Sigmoid colon (tissue), 7 donors: ENCODE measurements at regions of chr16 and their contacts with region 1.

Region 1: DNA sequence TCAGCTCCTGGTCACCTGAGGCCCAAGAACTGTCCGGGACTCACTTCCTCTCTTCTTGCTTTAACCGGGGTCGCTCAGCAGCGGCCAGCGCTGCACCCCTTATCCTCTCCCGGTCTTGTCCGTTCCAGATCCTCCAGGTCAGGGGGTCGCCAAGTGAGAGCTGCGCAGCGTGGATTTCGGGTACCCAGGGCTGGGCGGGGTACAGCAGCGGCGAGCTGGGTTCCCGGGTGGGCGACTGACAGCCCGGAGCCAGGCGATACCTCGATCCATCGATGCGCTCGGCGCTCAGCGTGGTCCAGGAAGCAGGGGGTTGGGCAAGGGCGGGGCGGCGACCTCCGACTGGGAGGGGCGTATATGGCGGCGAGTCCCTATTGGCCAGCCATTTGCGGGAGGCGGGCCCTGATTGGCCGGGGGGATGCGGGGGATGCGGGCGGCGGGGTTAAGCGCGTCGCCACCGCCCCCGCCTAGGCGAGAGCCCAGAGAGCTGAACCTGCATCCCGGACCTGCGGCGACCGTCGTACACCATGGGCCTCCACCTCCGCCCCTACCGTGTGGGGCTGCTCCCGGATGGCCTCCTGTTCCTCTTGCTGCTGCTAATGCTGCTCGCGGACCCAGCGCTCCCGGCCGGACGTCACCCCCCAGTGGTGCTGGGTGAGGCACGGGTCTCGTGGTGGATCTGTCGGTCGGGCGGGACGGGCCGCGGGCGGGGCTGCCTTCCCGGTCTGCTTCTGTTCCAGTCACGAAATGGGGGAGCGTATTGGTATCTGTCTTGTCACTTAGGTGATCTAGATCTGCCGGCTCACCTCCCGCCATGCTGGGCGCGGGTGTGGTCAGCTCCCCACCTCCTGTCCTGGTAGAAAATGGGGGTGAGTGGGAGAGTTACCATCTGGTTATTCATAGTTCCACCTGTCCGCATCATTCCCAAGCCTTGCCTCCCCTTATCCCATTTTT is at the start of gene PLA2G15:
- DNase-seq: peak; percentile 98
- H3K4me3 ChIP-seq: peak within 1 kb of the TSS; percentile 68 to 90 (median 80)
- H3K27ac ChIP-seq: peak within 1 kb of the TSS; percentile 71 to 76 (median 76)
- H3K4me1 ChIP-seq: peaks cover 0 to 35% (median 33%) of the 10 kb centered on the region in 4 donors
- H3K27me3 ChIP-seq: no peaks in the 10 kb centered on the region
- CTCF ChIP-seq: no peak
- EP300 ChIP-seq: no peak
- POLR2A ChIP-seq: peak; percentile 20 to 57
- total RNA-seq, gene PLA2G15: 10.2 to 15.7 (median 12.5) TPM

Region 2: DNA sequence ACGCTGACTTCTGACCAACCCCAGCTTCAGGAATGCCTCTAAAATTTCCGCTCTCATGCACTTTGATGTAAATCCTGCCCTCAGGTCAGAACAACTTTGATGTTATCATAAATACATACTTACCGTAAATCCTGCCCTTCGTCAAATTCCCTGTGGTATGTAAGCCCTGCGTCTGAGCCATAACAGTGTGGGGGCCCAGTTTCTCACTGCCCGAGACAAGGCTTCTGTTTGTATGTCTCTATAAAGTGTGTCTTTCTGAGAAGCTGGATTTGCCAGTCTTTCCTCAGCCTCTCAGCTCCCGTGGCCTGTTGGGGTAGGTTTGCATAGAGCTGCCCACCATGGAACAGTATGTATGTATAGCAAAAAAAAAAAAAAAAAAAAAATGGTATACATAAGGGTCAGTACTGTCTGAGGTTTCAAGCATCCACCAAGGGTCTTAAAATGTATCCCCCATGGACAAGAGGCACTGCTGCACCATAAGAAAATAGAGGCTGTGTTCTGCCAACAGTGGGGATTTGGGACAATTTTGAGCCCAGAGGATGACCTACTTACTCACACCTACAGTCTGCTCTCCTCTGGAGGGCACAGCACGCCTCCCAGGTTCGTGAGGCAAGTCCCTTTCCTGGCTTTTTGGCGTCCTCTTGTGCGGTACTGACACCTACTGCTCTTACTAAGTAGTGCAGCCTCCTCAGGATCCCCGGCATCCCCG is 83.1 kb after region 1 on chr16:
- intact Hi-C with region 1: loop called (anchors 1 kb)
- DNase-seq: peak; percentile 90
- H3K4me3 ChIP-seq: no peak overlapping the region
- H3K27ac ChIP-seq: no peak overlapping the region
- H3K4me1 ChIP-seq: peaks cover 0 to 8% (median 0%) of the 10 kb centered on the region in 4 donors
- H3K27me3 ChIP-seq: no peaks in the 10 kb centered on the region
- CTCF ChIP-seq: peak; percentile 88 to 94 (median 90)
- EP300 ChIP-seq: no peak
- POLR2A ChIP-seq: no peak